H1 (cell line): ENCODE measurements at regions of chr7 and their contacts with region 1.

Region 1: DNA sequence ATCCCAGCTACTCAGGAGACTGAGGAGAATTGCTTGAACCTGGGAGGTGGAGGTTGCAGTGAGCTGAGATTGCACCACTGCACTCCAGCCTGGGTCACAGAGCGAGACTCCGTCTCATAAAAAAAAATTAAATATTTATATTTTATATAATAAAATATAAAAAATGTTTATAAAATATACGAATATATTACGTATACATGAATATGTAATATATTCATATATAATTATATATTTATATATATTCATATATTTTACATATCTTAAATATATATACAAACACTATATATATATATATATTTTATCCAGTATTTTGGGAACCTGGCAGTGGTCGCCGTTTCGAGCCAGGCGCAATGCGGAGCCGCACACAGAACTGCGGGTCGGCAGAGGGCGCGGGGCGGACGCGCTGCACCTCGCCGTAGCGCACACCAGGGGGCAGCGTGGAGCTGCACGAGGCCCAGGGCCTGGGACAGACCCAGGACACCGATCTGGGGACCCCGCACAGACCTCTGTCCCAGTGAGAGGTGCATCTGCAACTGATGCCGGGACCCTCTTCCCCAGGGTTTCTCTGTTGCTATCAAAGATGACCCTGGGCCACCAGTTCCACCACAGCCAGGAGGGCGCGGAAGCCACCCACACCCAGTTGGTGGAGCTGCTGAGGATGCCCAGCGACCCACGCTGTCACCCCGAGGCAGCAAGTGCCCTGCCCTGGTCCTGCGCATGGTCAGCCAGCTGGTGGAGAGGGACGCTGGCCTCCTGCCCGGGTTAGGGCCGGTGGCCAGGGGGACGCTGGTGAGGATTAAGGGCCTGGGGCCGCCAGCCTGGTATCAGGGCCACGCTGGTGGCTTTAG is 22.7 kb downstream of the AP5Z1 start:
- DNase-seq: peak in 1 of 2 experiments; percentile 94
- H3K4me3 ChIP-seq: no peak overlapping the region
- H3K27ac ChIP-seq: no peak overlapping the region
- H3K4me1 ChIP-seq: no peaks in the 10 kb centered on the region
- H3K27me3 ChIP-seq: no peaks in the 10 kb centered on the region
- CTCF ChIP-seq: peak; percentile 89 to 99 (median 99)
- EP300 ChIP-seq: no peak
- POLR2A ChIP-seq: no peak
- RAD21 ChIP-seq: peak; percentile 84 to 89

Region 2: GRCh38 chr7:3916146-3916545 is 881.9 kb before region 1 on chr7:
- CTCF ChIA-PET with region 1: no interaction called
- POLR2A ChIA-PET with region 1: no interaction called
- DNase-seq: no peak
- H3K4me3 ChIP-seq: no peak overlapping the region
- H3K27ac ChIP-seq: no peak overlapping the region
- H3K4me1 ChIP-seq: peaks cover 0 to 3% (median under 1%) of the 10 kb centered on the region in 4 experiments; a peak in 2 of 7 replicates
- H3K27me3 ChIP-seq: no peaks in the 10 kb centered on the region
- CTCF ChIP-seq: no peak
- EP300 ChIP-seq: no peak
- POLR2A ChIP-seq: no peak
- RAD21 ChIP-seq: no peak

Region 3: DNA sequence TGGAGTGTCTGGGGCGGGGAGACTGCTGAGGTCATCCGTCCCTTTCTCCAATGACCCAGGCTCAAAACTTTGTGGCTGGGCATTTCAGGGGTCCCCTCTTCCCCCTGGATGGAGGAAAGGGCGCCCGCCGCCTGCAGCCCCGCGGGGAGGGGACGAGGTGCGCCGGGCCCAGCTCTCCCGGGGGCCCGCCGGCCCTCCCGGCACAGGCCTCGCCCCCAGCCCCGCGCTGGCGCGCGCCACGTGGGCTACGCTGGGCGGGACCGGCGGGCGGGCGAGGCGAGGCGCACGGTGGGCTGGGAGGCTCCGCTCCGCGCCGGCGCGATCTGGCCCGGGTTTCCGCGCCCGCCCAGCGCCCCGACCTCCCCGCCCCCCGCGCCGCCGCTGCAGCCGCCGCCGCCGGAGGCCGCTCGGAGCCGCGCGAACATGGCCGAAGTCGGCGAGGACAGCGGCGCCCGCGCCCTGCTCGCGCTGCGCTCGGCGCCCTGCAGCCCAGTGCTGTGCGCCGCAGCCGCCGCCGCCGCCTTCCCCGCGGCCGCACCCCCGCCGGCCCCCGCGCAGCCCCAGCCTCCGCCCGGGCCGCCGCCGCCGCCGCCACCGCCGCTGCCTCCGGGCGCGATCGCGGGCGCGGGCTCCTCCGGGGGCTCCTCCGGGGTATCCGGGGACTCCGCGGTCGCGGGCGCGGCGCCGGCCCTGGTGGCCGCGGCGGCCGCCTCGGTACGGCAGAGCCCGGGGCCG is 116.0 kb before region 1 on chr7 and contains the start of gene FOXK1:
- CTCF ChIA-PET with region 1: no interaction called
- POLR2A ChIA-PET with region 1: no interaction called
- DNase-seq: peak in 1 of 2 experiments; percentile 80
- H3K4me3 ChIP-seq: peak within 1 kb of the TSS; percentile 53 to 72 (median 58)
- H3K27ac ChIP-seq: no peak within 1 kb of the TSS
- H3K4me1 ChIP-seq: peaks cover 0 to 6% (median 5%) of the 10 kb centered on the region in 4 experiments; a peak in 5 of 7 replicates
- H3K27me3 ChIP-seq: peaks cover 3 to 31% (median 15%) of the 10 kb centered on the region in 4 experiments
- CTCF ChIP-seq: no peak
- EP300 ChIP-seq: no peak
- POLR2A ChIP-seq: no peak
- RAD21 ChIP-seq: no peak; a peak in 1 of 4 replicates
- total RNA-seq, gene FOXK1: 8.5 and 8.6 TPM in 2 replicates

Region 4: GRCh38 chr7:4700577-4701235 is 97.4 kb before region 1 on chr7:
- CTCF ChIA-PET with region 1: no interaction called
- POLR2A ChIA-PET with region 1: no interaction called
- DNase-seq: no peak
- H3K4me3 ChIP-seq: no peak overlapping the region
- H3K27ac ChIP-seq: no peak overlapping the region
- H3K4me1 ChIP-seq: peaks cover 0 to 5% (median 2%) of the 10 kb centered on the region in 4 experiments; a peak in 2 of 7 replicates
- H3K27me3 ChIP-seq: peaks cover 12 to 42% (median 33%) of the 10 kb centered on the region in 4 experiments
- CTCF ChIP-seq: no peak
- EP300 ChIP-seq: no peak
- POLR2A ChIP-seq: no peak
- RAD21 ChIP-seq: no peak

Region 5: DNA sequence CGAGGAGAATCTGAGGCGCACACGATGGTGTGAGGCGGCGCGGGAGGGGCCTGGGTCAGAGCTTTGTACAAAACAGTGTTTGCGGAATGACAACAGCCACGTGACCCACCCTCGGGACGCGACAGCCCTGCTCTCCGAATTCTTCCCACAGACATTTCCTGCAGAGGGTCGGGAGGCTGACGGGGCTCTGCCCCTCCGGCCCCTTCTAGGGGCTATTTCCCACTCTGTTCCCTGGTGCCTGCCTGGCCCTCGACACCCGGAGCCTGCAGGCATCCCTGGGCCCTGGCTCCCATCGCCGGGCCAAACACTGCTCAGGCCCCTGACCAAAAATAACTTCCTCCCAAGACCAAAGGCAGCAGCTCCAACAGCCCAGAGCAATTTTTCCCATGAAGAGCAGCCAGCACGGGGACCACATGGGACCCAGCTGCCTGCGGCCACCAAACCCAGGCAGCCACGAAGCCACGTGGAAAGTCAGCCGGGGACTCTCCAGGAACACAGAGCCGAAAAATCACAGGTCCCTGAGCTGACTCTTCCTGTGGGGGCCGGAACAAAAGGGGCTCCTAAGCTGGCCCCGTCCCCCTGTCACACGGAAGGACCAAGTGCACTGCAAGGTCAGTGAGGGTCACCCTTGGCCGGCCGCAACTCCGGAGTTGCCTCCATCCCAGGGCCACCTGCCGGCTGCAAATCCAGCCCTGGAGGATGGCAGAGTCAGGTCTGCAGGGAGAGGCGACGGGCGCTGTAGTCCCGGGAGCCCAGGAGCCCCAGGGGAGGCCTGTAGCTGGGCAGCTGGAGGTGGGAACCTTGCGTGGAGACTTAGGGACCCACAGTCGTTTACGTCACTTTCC is 21.7 kb after region 1 on chr7:
- CTCF ChIA-PET with region 1: interaction called, 59 read pairs
- POLR2A ChIA-PET with region 1: interaction called, 4 read pairs
- DNase-seq: no peak
- H3K4me3 ChIP-seq: no peak overlapping the region
- H3K27ac ChIP-seq: no peak overlapping the region
- H3K4me1 ChIP-seq: no peaks in the 10 kb centered on the region
- H3K27me3 ChIP-seq: no peaks in the 10 kb centered on the region
- CTCF ChIP-seq: no peak
- EP300 ChIP-seq: no peak
- POLR2A ChIP-seq: no peak
- RAD21 ChIP-seq: no peak

Region 6: DNA sequence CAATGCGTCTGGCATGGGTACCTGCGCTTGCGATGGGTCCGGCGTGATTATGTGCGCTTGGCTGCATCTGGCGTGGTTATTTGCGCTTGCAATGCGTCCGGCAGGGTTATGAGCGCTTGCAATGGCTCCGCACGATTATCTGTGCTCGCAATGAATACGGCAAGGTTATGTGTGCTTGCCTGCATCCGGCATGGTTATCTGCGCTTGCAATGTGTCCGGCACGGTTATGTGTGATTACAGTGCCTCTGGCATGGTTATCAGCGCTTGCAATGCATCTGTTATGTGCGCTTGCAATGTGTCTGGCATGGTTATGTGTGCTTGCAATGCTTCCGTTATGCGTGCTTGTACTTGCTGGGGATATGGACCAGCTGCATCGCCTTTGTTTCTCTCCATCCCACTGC is 285.2 kb after region 1 on chr7:
- CTCF ChIA-PET with region 1: interaction called, 65 read pairs
- POLR2A ChIA-PET with region 1: no interaction called
- DNase-seq: no peak
- H3K4me3 ChIP-seq: no peak overlapping the region
- H3K27ac ChIP-seq: no peak overlapping the region
- H3K4me1 ChIP-seq: no peaks in the 10 kb centered on the region
- H3K27me3 ChIP-seq: 0 out of 7 replicates have a peak, but pooled peaks cover 0 to 3% (median 1%) of the 10 kb centered on the region in 4 experiments
- CTCF ChIP-seq: no peak
- EP300 ChIP-seq: no peak
- POLR2A ChIP-seq: no peak
- RAD21 ChIP-seq: no peak